RWPE1 (cell line): ENCODE measurements at regions of chr14 and their contacts with region 1.

Region 1: GRCh38 chr14:88667555-88668273 is 104.9 kb downstream of the ZC3H14 start:
- DNase-seq: peak; percentile 58
- H3K27ac ChIP-seq: no peak overlapping the region
- CTCF ChIP-seq: peak; percentile 85

Region 2: GRCh38 chr14:88682495-88683114 is 14.9 kb after region 1 on chr14:
- CTCF ChIA-PET with region 1: interaction called, 10 read pairs
- POLR2A ChIA-PET with region 1: no interaction called
- DNase-seq: no peak
- H3K27ac ChIP-seq: no peak overlapping the region
- CTCF ChIP-seq: no peak

Region 3: GRCh38 chr14:88775513-88775927 is 107.8 kb after region 1 on chr14:
- CTCF ChIA-PET with region 1: no interaction called
- POLR2A ChIA-PET with region 1: no interaction called
- DNase-seq: peak; percentile 1
- H3K27ac ChIP-seq: no peak overlapping the region
- CTCF ChIP-seq: no peak

Region 4: GRCh38 chr14:88868558-88869159 is 200.9 kb after region 1 on chr14:
- CTCF ChIA-PET with region 1: interaction called, 12 read pairs
- POLR2A ChIA-PET with region 1: no interaction called
- DNase-seq: peak; percentile 30
- H3K27ac ChIP-seq: no peak overlapping the region
- CTCF ChIP-seq: peak; percentile 63